ENCODE measurements at regions of chr19 and their contacts with region 1.

Region 1: DNA sequence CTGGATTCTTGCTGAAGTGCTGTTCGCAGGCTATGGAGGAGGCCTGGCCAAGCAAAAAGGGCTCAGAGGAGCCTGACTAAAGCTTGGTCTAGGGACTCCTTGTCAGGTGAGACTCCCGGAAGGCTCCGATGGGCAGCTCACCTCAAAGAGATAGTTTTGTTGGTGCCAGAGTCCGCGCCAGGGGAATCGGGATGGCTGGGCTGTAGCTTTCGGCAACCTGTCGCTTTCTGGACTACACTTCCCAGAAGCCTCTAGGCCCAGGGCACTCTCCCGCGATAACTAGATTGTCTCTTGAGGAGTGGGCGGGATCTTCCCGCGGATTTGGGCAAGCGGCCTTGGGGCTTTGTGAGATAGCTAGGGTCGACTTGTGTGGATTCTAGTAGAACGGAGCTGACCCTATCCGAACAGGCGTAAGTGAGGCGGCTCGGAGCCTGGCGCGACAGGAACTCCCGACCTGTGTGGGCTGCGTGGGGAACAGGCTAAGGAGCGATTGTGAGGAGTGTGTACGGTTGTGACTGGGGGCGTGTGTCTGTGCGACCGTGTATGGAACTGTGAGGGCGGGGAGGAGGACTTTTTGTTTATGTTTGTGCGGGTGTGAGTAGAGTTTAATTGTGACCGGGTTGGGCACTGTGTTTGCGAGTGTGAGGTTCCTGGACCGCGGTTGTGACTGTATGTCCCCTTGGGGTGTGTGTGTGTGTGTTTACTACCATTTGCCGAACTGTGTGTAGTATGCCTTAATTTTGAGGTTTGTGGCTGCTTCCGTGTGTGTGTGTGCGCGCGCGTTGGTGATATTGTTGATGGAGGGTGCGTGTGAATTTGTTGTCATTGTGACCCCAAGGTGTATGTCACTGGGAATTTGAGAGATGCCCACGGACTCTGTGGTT is at the start of gene ZNF345:
- DNase-seq: peak; percentile 85 to 87
- ATAC-seq: peak; percentile 98 to 99
- H3K4me3 ChIP-seq: peak within 1 kb of the TSS; percentile 87 to 95 (median 92)
- H3K27ac ChIP-seq: peak within 1 kb of the TSS; percentile 87 to 98 (median 94)
- H3K4me1 ChIP-seq: peaks cover 11 to 14% of the 10 kb centered on the region in 2 donors
- H3K27me3 ChIP-seq: no peaks in the 10 kb centered on the region
- CTCF ChIP-seq: no peak
- POLR2A ChIP-seq: peak; percentile 22 to 25
- total RNA-seq, gene ZNF345: 0.36 to 3.9 (median 0.51) TPM

Region 2: GRCh38 chr19:36489118-36489919 is 361.5 kb before region 1 on chr19 and contains the start of gene ZNF566:
- in situ Hi-C with region 1: no loop called
- intact Hi-C with region 1: loop called (anchors 1 kb)
- DNase-seq: peak; percentile 75 to 89
- ATAC-seq: peak; percentile 99 to 100
- H3K4me3 ChIP-seq: peak within 1 kb of the TSS; percentile 76 to 98 (median 76)
- H3K27ac ChIP-seq: peak within 1 kb of the TSS; percentile 90 to 98 (median 91)
- H3K4me1 ChIP-seq: peaks cover 5 to 11% of the 10 kb centered on the region in 2 donors
- H3K27me3 ChIP-seq: no peaks in the 10 kb centered on the region
- CTCF ChIP-seq: no peak
- POLR2A ChIP-seq: peak; percentile 28 to 33
- total RNA-seq, gene ZNF566: 4.1 to 8.3 (median 5.9) TPM

Region 3: DNA sequence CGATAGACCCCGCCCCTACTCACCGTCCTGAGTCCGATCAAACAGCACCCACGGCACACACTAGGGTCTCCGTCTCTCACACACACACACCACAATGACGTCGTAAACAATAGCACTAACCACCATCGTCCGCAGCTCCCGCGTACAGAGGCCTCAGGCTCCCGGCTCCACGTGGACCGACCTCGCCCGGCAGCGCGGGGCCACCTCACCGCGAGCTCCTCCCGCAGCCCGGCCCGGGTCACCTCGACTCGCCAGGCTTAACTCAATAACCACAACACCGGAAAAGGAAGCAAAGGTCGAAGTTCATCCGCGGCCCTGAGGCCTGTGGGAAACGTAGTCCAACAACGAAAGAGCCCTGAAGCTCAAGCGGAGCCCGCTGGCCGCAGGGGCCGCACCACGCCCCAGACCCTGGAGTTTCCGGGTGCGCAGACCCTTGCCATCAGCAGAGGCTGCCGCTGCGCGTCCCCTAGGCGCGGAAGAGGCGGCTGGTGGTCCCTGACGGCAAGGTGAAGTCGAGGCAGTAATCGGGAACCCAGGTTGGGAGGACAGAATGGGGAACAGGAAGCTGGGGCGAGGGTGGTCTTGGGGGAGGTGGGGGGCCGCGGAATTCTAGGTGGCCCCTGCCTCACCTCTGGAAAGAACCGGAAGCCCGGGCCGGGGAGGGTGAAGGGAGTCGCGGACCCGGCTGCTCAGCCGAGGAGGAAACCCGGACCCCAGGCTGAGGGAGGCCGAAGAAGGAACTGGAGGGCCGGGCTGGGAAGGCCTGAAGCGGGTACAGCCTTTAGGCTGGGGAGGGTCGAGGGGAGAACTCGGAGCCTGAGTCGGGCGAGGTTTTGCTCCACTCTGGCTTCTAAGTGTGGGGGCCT is 277.5 kb before region 1 on chr19 and contains the start of gene ZNF529:
- in situ Hi-C with region 1: no loop called
- intact Hi-C with region 1: loop called (anchors 2 kb)
- DNase-seq: peak; percentile 79 to 85
- ATAC-seq: peak; percentile 99
- H3K4me3 ChIP-seq: peak within 1 kb of the TSS; percentile 85 to 100 (median 94)
- H3K27ac ChIP-seq: peak within 1 kb of the TSS; percentile 81 to 91 (median 88)
- H3K4me1 ChIP-seq: peaks cover 16 to 17% of the 10 kb centered on the region in 2 donors
- H3K27me3 ChIP-seq: no peaks in the 10 kb centered on the region
- CTCF ChIP-seq: no peak
- POLR2A ChIP-seq: peak; percentile 73 to 75
- total RNA-seq, gene ZNF529: 4.1 to 6.6 (median 5.4) TPM

Region 4: GRCh38 chr19:36674201-36674600 is 176.6 kb before region 1 on chr19:
- in situ Hi-C with region 1: no loop called
- intact Hi-C with region 1: no loop called
- DNase-seq: no peak
- ATAC-seq: no peak
- H3K4me3 ChIP-seq: no peak overlapping the region
- H3K27ac ChIP-seq: no peak overlapping the region
- H3K4me1 ChIP-seq: no peaks in the 10 kb centered on the region
- H3K27me3 ChIP-seq: no peaks in the 10 kb centered on the region
- CTCF ChIP-seq: no peak
- POLR2A ChIP-seq: no peak

Region 5: GRCh38 chr19:36687214-36688056 is 163.4 kb before region 1 on chr19 and contains the start of gene ZNF567:
- in situ Hi-C with region 1: no loop called
- intact Hi-C with region 1: loop called (anchors 1 kb)
- DNase-seq: peak; percentile 93 to 96
- ATAC-seq: peak; percentile 99
- H3K4me3 ChIP-seq: peak within 1 kb of the TSS; percentile 76 to 96 (median 90)
- H3K27ac ChIP-seq: peak within 1 kb of the TSS; percentile 77 to 87 (median 81)
- H3K4me1 ChIP-seq: peaks cover 13 to 16% of the 10 kb centered on the region in 2 donors
- H3K27me3 ChIP-seq: no peaks in the 10 kb centered on the region
- CTCF ChIP-seq: no peak
- POLR2A ChIP-seq: peak; percentile 68 to 74
- total RNA-seq, gene ZNF567: 1.1 to 3.5 (median 1.9) TPM

Region 6: DNA sequence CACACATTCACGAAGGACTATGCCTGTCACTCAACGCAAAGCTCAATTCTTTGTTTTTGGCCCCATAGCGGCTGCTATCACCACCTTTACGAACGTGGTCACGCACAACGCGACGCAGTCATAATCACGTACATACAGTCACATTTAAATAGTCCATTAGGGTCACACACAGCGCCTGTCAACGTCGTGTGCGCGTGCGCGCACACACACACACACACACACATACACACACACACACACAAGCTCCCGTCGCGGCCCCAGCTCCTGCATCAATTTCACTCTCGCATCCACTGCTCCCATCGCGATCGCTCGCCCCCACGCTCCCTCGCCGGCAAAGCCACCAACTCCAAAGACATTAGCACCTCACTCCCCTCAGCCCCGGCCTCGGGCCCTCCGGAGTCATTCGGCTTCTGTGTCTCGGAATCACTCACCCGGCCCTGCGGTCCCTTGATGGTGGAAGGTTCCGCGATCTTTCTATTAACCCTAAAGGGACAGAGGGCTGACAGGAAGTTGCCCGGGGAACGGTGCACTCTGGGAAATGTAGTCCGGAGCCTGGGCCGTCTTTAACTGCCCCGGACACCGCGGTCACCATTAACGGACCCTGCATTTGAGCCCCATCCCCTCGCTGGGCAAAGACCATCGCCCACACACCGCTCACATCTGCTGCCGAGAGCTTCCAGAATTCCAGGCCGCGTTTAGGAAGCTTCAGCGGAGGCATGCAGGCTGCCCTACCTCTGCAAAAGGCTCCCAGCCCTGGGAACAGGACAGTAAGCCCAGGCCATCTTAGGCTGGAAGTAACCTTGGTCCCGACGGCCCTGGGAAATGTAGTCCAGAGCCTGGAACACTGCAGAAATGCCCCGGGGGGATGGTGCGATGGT is 12.7 kb before region 1 on chr19 and contains the start of gene ZNF790:
- in situ Hi-C with region 1: no loop called
- intact Hi-C with region 1: loop called (anchors 1 kb)
- DNase-seq: peak; percentile 74 to 85
- ATAC-seq: peak; percentile 98 to 99
- H3K4me3 ChIP-seq: peak within 1 kb of the TSS; percentile 68 to 87 (median 79)
- H3K27ac ChIP-seq: peak within 1 kb of the TSS; percentile 74 to 90 (median 86)
- H3K4me1 ChIP-seq: peaks cover 8 to 9% of the 10 kb centered on the region in 2 donors
- H3K27me3 ChIP-seq: no peaks in the 10 kb centered on the region
- CTCF ChIP-seq: no peak
- POLR2A ChIP-seq: no peak
- total RNA-seq, gene ZNF790: 2.4 to 8.1 (median 5.2) TPM

Region 7: DNA sequence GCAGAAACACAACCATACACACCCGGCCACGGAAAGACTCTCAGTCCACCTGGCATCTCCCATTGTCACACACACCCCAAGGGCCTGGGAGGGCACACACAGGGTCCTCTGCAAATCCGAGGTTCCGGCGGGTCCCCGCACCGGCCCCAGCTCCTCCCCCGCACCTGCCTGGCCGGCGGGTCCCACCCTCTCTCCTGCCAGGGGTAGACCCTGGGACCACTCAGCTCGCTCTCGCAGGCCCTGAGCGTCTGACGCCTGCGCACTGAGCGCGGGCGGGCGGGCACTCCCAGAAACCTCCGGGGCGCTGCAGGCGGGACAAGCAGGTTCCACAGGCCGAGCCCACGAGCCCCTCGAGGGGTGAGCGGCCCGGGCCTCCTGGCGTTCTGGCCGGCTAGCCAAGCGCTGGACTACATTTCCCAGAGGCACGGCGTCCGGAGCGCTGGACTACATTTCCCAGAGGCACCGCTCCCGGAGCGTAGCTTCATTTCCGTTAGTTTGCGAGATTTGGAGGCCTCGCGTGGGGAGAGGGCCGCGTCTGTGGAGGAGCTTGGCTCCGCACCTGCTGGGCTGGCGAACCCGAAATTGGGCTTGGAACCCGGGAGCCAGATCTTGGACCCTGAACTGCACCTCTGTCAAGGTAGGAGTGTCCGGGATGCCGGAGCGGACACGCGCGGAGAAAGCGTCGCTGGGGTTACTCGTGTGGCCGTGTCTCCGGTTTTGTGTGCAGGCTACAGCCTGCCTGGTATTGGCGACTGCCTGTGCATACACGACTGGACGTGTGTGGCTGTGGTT is 227.3 kb after region 1 on chr19 and contains the start of gene ZNF420:
- in situ Hi-C with region 1: no loop called
- intact Hi-C with region 1: loop called (anchors 1 kb)
- DNase-seq: peak; percentile 86 to 92
- ATAC-seq: peak; percentile 98 to 99
- H3K4me3 ChIP-seq: peak within 1 kb of the TSS; percentile 82 to 98 (median 93)
- H3K27ac ChIP-seq: peak within 1 kb of the TSS; percentile 84 to 92 (median 89)
- H3K4me1 ChIP-seq: peaks cover 8 to 11% of the 10 kb centered on the region in 2 donors
- H3K27me3 ChIP-seq: no peaks in the 10 kb centered on the region
- CTCF ChIP-seq: no peak
- POLR2A ChIP-seq: peak in 1 of 2 donors; percentile 47
- total RNA-seq, gene ZNF420: 3.0 to 15.4 (median 3.7) TPM

Region 8: GRCh38 chr19:37370880-37371661 is 520.3 kb after region 1 on chr19 and contains the start of gene ZNF527:
- in situ Hi-C with region 1: no loop called
- intact Hi-C with region 1: loop called (anchors 1 kb)
- DNase-seq: peak; percentile 95 to 97
- ATAC-seq: peak; percentile 98 to 99
- H3K4me3 ChIP-seq: peak within 1 kb of the TSS; percentile 73 to 90 (median 88)
- H3K27ac ChIP-seq: peak within 1 kb of the TSS; percentile 84 to 91 (median 88)
- H3K4me1 ChIP-seq: peaks cover 7 to 8% of the 10 kb centered on the region in 2 donors
- H3K27me3 ChIP-seq: no peaks in the 10 kb centered on the region
- CTCF ChIP-seq: no peak
- POLR2A ChIP-seq: peak; percentile 76 to 88
- total RNA-seq, gene ZNF527: 2.0 to 6.0 (median 2.8) TPM

Measured in gastrocnemius medialis (tissue), 4 donors.